GM12878 (cell line): ENCODE measurements at regions of chr14 and their contacts with region 1.

Region 1: GRCh38 chr14:67666750-67667449 is 7.5 kb downstream of the VTI1B start:
- DNase-seq: peak; percentile 30
- ATAC-seq: peak; percentile 80
- H3K4me3 ChIP-seq: no peak overlapping the region
- H3K27ac ChIP-seq: no peak overlapping the region
- H3K4me1 ChIP-seq: peaks cover 17% of the 10 kb centered on the region
- H3K27me3 ChIP-seq: no peaks in the 10 kb centered on the region
- CTCF ChIP-seq: peak; percentile 57 to 71 (median 65)
- EP300 ChIP-seq: no peak
- POLR2A ChIP-seq: no peak
- RAD21 ChIP-seq: peak; percentile 86

Region 2: DNA sequence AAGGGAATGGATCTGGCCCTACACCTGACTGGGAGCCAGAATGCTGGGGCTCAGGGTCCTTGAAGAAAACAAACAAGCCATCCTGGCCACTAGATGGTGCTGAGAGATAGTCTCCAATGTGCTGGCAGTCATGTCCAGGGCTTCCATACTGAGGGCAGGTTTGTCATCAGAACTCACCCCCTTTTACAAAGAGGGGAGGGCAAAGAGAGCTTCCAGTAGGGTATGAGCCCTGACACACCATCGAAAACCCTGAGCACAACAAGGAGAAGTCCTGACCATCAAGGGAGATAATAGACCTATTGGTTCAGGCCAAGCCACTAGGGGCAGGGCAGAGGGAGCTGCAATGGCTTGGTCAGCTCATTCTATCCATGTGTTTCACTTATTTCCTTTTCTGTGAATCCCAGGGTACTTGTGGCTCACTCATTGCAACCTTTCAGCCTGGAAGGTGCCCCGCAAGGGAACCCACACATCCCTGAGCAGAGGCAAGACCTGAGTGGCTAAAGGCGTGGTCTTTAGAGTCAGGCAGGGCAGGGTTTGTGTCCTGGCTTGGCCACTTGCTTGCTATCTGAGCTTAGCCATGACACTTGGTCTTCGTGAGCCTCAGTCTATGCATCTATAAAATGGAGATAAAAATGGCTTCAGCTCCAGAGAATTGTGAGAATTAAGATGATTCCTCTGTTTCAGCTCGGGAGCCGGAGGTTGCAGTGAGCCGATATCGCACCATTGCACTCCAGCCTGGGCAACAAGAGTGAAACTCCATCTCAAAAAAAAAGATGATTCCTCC is 140.0 kb before region 1 on chr14:
- CTCF ChIA-PET with region 1: interaction called, 23 read pairs
- POLR2A ChIA-PET with region 1: no interaction called
- RAD21 ChIA-PET with region 1: interaction called, 4 read pairs
- SMC1A ChIA-PET with region 1: interaction called, 16 read pairs
- in situ Hi-C with region 1: no loop called
- intact Hi-C with region 1: no loop called
- DNase-seq: peak; percentile 13
- ATAC-seq: peak; percentile 96
- H3K4me3 ChIP-seq: no peak overlapping the region
- H3K27ac ChIP-seq: no peak overlapping the region
- H3K4me1 ChIP-seq: no peaks in the 10 kb centered on the region
- H3K27me3 ChIP-seq: peaks cover 0 to 9% of the 10 kb centered on the region in 2 experiments; a peak in 1 of 4 replicates
- CTCF ChIP-seq: peak; percentile 53 to 82 (median 62)
- EP300 ChIP-seq: no peak
- POLR2A ChIP-seq: no peak
- RAD21 ChIP-seq: peak; percentile 68

Region 3: DNA sequence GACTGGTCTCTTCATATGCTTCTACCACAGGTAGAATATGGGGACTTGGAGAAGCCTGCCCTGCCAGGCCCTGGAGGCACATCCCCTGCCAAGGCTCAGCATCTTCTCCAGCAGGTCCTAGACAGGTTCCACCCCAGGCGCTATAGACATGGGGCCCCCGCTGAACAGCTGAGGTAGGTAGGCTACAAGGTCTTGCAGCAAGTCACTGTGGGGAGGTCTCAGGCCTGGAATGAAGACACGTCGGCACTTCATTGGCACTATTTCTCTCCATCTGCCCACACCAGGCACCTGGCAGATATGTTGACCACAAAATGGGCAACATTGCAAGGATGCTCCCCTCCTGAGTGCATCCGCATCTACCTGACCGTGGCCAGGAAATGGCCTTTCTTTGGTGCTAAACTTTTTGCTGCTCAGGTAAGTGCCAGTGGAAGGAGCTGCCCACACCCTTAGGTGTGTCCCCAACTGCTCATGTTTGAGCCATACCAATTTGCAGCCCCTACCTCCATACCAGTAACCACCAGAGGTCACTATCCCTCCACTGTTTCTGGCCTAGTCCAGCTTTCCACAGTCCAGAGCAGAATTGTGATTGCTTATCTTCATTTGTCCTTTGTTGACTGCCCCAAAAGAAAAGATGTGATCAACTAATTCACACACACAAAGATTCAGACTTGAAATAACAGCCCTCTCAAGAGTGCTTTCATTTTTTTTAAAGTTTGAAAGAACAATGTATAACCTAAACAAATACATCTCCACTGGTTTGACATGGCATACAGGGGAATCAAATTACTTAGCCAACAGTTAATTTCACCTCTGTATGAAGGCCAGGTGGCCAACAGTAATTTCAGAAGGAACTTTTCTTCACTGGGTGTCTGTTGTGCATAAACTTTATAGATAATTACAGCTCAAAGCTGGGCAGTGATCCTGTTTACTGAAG is 82.9 kb before region 1 on chr14:
- CTCF ChIA-PET with region 1: interaction called, 142 read pairs
- POLR2A ChIA-PET with region 1: interaction called, 4 read pairs
- RAD21 ChIA-PET with region 1: interaction called, 114 read pairs
- SMC1A ChIA-PET with region 1: interaction called, 133 read pairs
- in situ Hi-C with region 1: loop called (anchors 5 kb)
- intact Hi-C with region 1: loop called (anchors 1 kb)
- DNase-seq: no peak
- ATAC-seq: peak; percentile 98
- H3K4me3 ChIP-seq: no peak overlapping the region
- H3K27ac ChIP-seq: no peak overlapping the region
- H3K4me1 ChIP-seq: no peaks in the 10 kb centered on the region
- H3K27me3 ChIP-seq: no peaks in the 10 kb centered on the region
- CTCF ChIP-seq: peak; percentile 77 to 83 (median 80)
- EP300 ChIP-seq: no peak
- POLR2A ChIP-seq: no peak
- RAD21 ChIP-seq: peak; percentile 96

Region 4: GRCh38 chr14:67599698-67600561 is 67.0 kb before region 1 on chr14 and contains the start of gene PIGH:
- CTCF ChIA-PET with region 1: interaction called, 30 read pairs
- POLR2A ChIA-PET with region 1: interaction called, 8 read pairs
- RAD21 ChIA-PET with region 1: interaction called, 13 read pairs
- SMC1A ChIA-PET with region 1: interaction called, 12 read pairs
- in situ Hi-C with region 1: no loop called
- intact Hi-C with region 1: no loop called
- DNase-seq: peak; percentile 56
- ATAC-seq: peak; percentile 96
- H3K4me3 ChIP-seq: peak within 1 kb of the TSS; percentile 85
- H3K27ac ChIP-seq: peak within 1 kb of the TSS; percentile 70
- H3K4me1 ChIP-seq: peaks cover 9% of the 10 kb centered on the region; the same call in 1 of the 2 replicates
- H3K27me3 ChIP-seq: no peaks in the 10 kb centered on the region
- CTCF ChIP-seq: peak; percentile 49 to 61 (median 50); a peak in 5 of 6 replicates
- EP300 ChIP-seq: no peak
- POLR2A ChIP-seq: peak; percentile 85
- RAD21 ChIP-seq: no peak
- polyA plus RNA-seq, gene PIGH: 15.5 to 17.8 TPM

Region 5: GRCh38 chr14:67636361-67636919 is 30.5 kb before region 1 on chr14:
- CTCF ChIA-PET with region 1: interaction called, 6 read pairs
- POLR2A ChIA-PET with region 1: no interaction called
- RAD21 ChIA-PET with region 1: interaction called, 17 read pairs
- SMC1A ChIA-PET with region 1: interaction called, 3 read pairs
- in situ Hi-C with region 1: no loop called
- intact Hi-C with region 1: no loop called
- DNase-seq: peak; percentile 39
- ATAC-seq: peak; percentile 59
- H3K4me3 ChIP-seq: no peak overlapping the region
- H3K27ac ChIP-seq: no peak overlapping the region
- H3K4me1 ChIP-seq: no peaks in the 10 kb centered on the region
- H3K27me3 ChIP-seq: no peaks in the 10 kb centered on the region
- CTCF ChIP-seq: no peak
- EP300 ChIP-seq: no peak
- POLR2A ChIP-seq: no peak
- RAD21 ChIP-seq: no peak

Region 6: GRCh38 chr14:67650694-67651093 is 16.2 kb before region 1 on chr14:
- CTCF ChIA-PET with region 1: interaction called, 7 read pairs
- POLR2A ChIA-PET with region 1: no interaction called
- RAD21 ChIA-PET with region 1: interaction called, 12 read pairs
- SMC1A ChIA-PET with region 1: interaction called, 5 read pairs
- in situ Hi-C with region 1: no loop called
- intact Hi-C with region 1: no loop called
- DNase-seq: no peak
- ATAC-seq: no peak
- H3K4me3 ChIP-seq: no peak overlapping the region
- H3K27ac ChIP-seq: no peak overlapping the region
- H3K4me1 ChIP-seq: no peaks in the 10 kb centered on the region
- H3K27me3 ChIP-seq: no peaks in the 10 kb centered on the region
- CTCF ChIP-seq: no peak
- EP300 ChIP-seq: no peak
- POLR2A ChIP-seq: no peak
- RAD21 ChIP-seq: no peak

Region 7: DNA sequence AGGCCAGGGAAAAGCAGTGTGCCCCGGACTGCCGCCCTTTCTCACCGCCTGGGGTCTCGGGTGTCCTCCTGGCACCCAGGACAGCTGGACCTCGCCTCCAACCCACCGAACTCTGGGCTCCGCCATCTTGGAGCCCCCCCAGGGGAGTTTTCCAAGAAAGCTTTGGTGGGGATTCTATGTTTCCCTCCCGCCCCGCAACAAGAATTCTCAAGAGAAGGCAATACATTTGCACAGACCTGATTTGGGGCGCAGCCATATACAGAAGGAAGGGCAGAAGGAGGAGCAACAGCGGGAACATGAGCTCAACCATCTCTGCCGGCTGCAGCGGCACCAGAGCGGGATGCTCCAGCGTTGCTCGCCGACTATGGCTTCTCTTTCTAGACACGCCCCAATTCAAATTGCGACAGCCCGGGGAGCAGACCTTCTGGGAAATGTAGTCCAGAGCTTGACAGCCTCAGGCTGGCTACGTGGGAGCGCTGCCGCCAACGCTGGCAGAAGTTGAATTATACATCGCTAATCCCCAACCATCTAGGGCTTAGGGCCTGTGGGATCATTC is 28.6 kb after region 1 on chr14 and contains the start of gene RDH11:
- CTCF ChIA-PET with region 1: interaction called, 223 read pairs
- POLR2A ChIA-PET with region 1: interaction called, 71 read pairs
- RAD21 ChIA-PET with region 1: interaction called, 144 read pairs
- SMC1A ChIA-PET with region 1: interaction called, 24 read pairs
- in situ Hi-C with region 1: no loop called
- intact Hi-C with region 1: no loop called
- DNase-seq: peak; percentile 50
- ATAC-seq: peak; percentile 96
- H3K4me3 ChIP-seq: peak within 1 kb of the TSS; percentile 97
- H3K27ac ChIP-seq: peak within 1 kb of the TSS; percentile 88
- H3K4me1 ChIP-seq: no peaks in the 10 kb centered on the region
- H3K27me3 ChIP-seq: no peaks in the 10 kb centered on the region
- CTCF ChIP-seq: no peak
- EP300 ChIP-seq: no peak
- POLR2A ChIP-seq: peak; percentile 91
- RAD21 ChIP-seq: no peak
- polyA plus RNA-seq, gene RDH11: 76.2 to 88.7 TPM

Region 8: DNA sequence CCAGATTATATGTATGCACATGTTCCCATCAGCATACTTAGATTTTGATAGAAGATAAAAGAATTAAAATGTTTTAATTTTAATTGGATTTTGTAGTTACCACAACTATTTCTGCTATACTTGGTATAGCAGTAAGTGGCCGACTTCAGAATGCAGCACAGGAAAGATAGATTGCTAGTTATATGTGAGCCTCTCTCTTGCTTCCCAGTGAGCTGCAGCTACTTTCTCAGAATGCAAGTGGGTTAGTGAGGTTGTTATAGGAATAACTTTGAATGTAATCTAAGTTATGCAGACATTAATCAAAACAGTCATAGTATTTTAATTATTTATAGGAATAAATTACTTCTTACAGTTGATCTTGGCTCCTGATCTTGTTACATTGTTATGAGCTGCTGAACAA is 393.3 kb after region 1 on chr14:
- CTCF ChIA-PET with region 1: no interaction called
- POLR2A ChIA-PET with region 1: no interaction called
- RAD21 ChIA-PET with region 1: no interaction called
- SMC1A ChIA-PET with region 1: no interaction called
- in situ Hi-C with region 1: no loop called
- intact Hi-C with region 1: no loop called
- DNase-seq: no peak
- ATAC-seq: no peak
- H3K4me3 ChIP-seq: no peak overlapping the region
- H3K27ac ChIP-seq: no peak overlapping the region
- H3K4me1 ChIP-seq: no peaks in the 10 kb centered on the region
- H3K27me3 ChIP-seq: no peaks in the 10 kb centered on the region
- CTCF ChIP-seq: no peak
- EP300 ChIP-seq: no peak
- POLR2A ChIP-seq: no peak
- RAD21 ChIP-seq: no peak